ENCODE measurements at regions of chr6 and their contacts with region 1.

Region 1: DNA sequence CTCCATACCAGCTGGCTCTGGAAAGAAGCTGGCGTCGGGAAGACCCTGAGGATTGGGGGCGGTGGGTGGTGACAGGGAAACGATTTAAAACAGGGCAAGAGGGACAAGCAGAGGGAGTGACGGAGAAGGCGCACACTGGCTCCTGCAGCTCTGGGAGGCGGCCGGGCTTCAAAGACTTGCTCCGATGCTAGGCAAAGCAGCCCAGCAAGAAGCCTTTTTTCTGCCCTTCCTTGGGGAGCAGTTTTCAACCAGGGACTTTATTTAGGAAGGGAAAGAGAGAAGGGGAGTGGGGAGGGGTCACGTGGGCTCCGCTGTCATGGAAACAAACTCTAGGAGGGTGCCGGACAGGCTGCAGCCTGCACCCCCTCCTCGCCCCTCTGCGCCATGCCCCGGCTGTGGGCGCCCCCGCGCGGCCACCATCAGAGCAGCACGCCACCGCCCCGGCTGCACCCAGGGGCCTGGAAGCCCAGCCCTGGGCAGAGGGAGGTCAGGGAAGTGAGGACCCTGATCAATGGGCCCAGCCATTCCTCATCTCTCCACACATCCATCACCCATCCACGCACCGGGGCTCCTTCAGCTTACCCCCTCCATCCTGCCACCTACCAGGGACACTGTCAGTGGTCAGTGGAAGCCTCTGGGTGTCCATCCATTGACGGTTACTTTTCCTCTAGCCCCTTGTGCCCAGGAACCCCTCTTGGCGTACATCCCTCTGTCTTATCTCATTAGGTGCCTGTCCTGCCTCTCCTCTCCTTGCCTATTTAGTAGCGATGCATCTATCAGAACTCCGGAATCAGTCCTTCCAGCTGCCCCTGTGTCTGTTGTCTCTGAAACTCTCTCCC is 66.6 kb upstream of the CCDC167 start:
- DNase-seq: peak; percentile 59
- H3K4me3 ChIP-seq: peak overlapping the region in 2 of 3 experiments; percentile 14 to 26
- H3K27ac ChIP-seq: no peak overlapping the region
- H3K4me1 ChIP-seq: no peaks in the 10 kb centered on the region
- H3K27me3 ChIP-seq: peaks cover 7 to 34% of the 10 kb centered on the region in 2 experiments
- CTCF ChIP-seq: peak; percentile 88 to 96
- POLR2A ChIP-seq: no peak

Region 2: GRCh38 chr6:37365762-37366161 is 200.6 kb before region 1 on chr6:
- CTCF ChIA-PET with region 1: interaction called, 10 read pairs
- POLR2A ChIA-PET with region 1: no interaction called
- dilution Hi-C with region 1: no loop called
- intact Hi-C with region 1: loop called (anchors 5 kb)
- DNase-seq: peak; percentile 71
- H3K4me3 ChIP-seq: no peak overlapping the region
- H3K27ac ChIP-seq: no peak overlapping the region
- H3K4me1 ChIP-seq: peaks cover 22% of the 10 kb centered on the region
- H3K27me3 ChIP-seq: no peaks in the 10 kb centered on the region
- CTCF ChIP-seq: no peak
- POLR2A ChIP-seq: no peak

Region 3: GRCh38 chr6:37489660-37490361 is 76.5 kb before region 1 on chr6:
- CTCF ChIA-PET with region 1: interaction called, 25 read pairs
- POLR2A ChIA-PET with region 1: no interaction called
- dilution Hi-C with region 1: no loop called
- intact Hi-C with region 1: no loop called
- DNase-seq: no peak
- H3K4me3 ChIP-seq: no peak overlapping the region
- H3K27ac ChIP-seq: no peak overlapping the region
- H3K4me1 ChIP-seq: no peaks in the 10 kb centered on the region
- H3K27me3 ChIP-seq: no peaks in the 10 kb centered on the region
- CTCF ChIP-seq: no peak
- POLR2A ChIP-seq: no peak

Region 4: GRCh38 chr6:37538107-37538506 is 28.2 kb before region 1 on chr6:
- CTCF ChIA-PET with region 1: interaction called, 162 read pairs
- POLR2A ChIA-PET with region 1: no interaction called
- dilution Hi-C with region 1: no loop called
- intact Hi-C with region 1: loop called (anchors 1 kb)
- DNase-seq: peak; percentile 20
- H3K4me3 ChIP-seq: no peak overlapping the region
- H3K27ac ChIP-seq: no peak overlapping the region
- H3K4me1 ChIP-seq: peaks cover 7% of the 10 kb centered on the region
- H3K27me3 ChIP-seq: peaks cover 47 to 48% of the 10 kb centered on the region in 2 experiments
- CTCF ChIP-seq: peak; percentile 33 to 53
- POLR2A ChIP-seq: no peak

Region 5: DNA sequence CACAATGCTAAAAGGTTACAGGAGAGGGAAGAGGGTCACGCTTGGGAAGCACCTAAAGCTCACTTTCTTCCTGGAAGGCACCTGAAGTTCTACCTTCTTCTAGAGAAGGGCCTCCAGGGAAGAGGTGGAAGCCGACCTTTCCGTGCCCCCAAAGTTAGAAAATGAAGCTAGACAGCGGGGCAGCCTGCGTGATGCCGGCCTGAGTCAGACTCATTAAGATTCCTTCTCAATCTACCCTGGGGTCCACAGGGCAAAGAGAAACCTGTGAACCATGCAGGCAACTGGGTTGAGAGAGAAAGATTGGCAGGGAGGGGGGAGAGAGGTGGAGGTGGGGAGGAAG is 11.9 kb before region 1 on chr6:
- CTCF ChIA-PET with region 1: interaction called, 37 read pairs
- POLR2A ChIA-PET with region 1: no interaction called
- dilution Hi-C with region 1: no loop called
- intact Hi-C with region 1: no loop called
- DNase-seq: no peak
- H3K4me3 ChIP-seq: no peak overlapping the region
- H3K27ac ChIP-seq: no peak overlapping the region
- H3K4me1 ChIP-seq: peaks cover 24% of the 10 kb centered on the region
- H3K27me3 ChIP-seq: peaks cover 0 to 2% of the 10 kb centered on the region in 2 experiments
- CTCF ChIP-seq: no peak
- POLR2A ChIP-seq: no peak

Region 6: GRCh38 chr6:37602346-37602745 is 36.0 kb after region 1 on chr6:
- CTCF ChIA-PET with region 1: no interaction called
- POLR2A ChIA-PET with region 1: no interaction called
- dilution Hi-C with region 1: no loop called
- intact Hi-C with region 1: no loop called
- DNase-seq: no peak
- H3K4me3 ChIP-seq: no peak overlapping the region
- H3K27ac ChIP-seq: no peak overlapping the region
- H3K4me1 ChIP-seq: no peaks in the 10 kb centered on the region
- H3K27me3 ChIP-seq: peaks cover 5 to 15% of the 10 kb centered on the region in 2 experiments
- CTCF ChIP-seq: no peak
- POLR2A ChIP-seq: no peak

Region 7: GRCh38 chr6:37630281-37630799 is 64.0 kb after region 1 on chr6:
- CTCF ChIA-PET with region 1: no interaction called
- POLR2A ChIA-PET with region 1: no interaction called
- dilution Hi-C with region 1: no loop called
- intact Hi-C with region 1: no loop called
- DNase-seq: peak; percentile 97
- H3K4me3 ChIP-seq: no peak overlapping the region
- H3K27ac ChIP-seq: peak overlapping the region; percentile 84
- H3K4me1 ChIP-seq: peaks cover 20% of the 10 kb centered on the region
- H3K27me3 ChIP-seq: peaks cover 0 to 5% of the 10 kb centered on the region in 2 experiments
- CTCF ChIP-seq: no peak
- POLR2A ChIP-seq: no peak

Region 8: GRCh38 chr6:39102071-39102820 is 1535.9 kb after region 1 on chr6:
- CTCF ChIA-PET with region 1: no interaction called
- POLR2A ChIA-PET with region 1: no interaction called
- dilution Hi-C with region 1: no loop called
- intact Hi-C with region 1: no loop called
- DNase-seq: peak; percentile 9
- H3K4me3 ChIP-seq: no peak overlapping the region
- H3K27ac ChIP-seq: no peak overlapping the region
- H3K4me1 ChIP-seq: no peaks in the 10 kb centered on the region
- H3K27me3 ChIP-seq: peaks cover 0 to 5% of the 10 kb centered on the region in 2 experiments
- CTCF ChIP-seq: peak; percentile 7 to 18
- POLR2A ChIP-seq: no peak